Sciatic nerve (tissue), 2 donors: ENCODE measurements at regions of chr18 and their contacts with region 1.

Region 1: GRCh38 chr18:48293954-48294898 is 115.0 kb downstream of the ZBTB7C start:
- DNase-seq: peak; percentile 42
- ATAC-seq: peak; percentile 16

Region 2: GRCh38 chr18:46877329-46877987 is 1416.8 kb before region 1 on chr18:
- intact Hi-C with region 1: loop called (anchors 5 kb)
- DNase-seq: no peak
- ATAC-seq: no peak

Region 3: DNA sequence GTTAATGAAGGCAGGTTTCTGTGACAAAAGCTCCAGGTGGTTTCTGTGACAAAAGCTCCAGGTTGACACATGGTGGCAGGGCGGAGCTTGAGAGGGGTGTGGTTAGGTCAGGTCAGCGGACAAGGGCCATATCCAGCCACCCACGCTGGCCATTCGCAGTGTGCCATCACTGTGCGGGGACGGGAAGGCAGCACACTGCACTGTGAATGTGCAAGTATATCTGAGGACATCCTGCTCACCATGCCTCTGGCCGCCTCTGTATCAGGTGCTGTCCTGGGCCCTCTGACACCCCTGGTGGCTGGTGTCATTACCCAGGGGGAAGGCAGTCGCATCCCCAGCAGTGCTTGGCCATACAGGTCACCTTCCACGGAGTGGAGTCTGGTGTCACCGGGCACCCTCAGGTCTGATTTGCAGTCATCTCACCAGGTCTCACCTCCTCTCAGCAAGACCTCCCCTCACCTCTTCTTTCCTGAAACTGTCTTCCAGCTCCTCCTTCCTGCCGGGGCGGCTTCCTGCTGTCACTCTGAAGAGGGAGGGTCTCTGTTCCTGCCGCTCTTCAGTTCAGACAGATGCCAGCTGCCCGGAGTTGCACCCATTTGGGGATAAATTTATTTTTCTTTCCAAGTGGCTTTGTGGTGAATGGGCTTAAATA is 279.5 kb after region 1 on chr18:
- intact Hi-C with region 1: no loop called
- DNase-seq: no peak
- ATAC-seq: no peak